Endothelial cell of umbilical vein (primary cell): ENCODE measurements at regions of chr11 and their contacts with region 1.

Region 1: DNA sequence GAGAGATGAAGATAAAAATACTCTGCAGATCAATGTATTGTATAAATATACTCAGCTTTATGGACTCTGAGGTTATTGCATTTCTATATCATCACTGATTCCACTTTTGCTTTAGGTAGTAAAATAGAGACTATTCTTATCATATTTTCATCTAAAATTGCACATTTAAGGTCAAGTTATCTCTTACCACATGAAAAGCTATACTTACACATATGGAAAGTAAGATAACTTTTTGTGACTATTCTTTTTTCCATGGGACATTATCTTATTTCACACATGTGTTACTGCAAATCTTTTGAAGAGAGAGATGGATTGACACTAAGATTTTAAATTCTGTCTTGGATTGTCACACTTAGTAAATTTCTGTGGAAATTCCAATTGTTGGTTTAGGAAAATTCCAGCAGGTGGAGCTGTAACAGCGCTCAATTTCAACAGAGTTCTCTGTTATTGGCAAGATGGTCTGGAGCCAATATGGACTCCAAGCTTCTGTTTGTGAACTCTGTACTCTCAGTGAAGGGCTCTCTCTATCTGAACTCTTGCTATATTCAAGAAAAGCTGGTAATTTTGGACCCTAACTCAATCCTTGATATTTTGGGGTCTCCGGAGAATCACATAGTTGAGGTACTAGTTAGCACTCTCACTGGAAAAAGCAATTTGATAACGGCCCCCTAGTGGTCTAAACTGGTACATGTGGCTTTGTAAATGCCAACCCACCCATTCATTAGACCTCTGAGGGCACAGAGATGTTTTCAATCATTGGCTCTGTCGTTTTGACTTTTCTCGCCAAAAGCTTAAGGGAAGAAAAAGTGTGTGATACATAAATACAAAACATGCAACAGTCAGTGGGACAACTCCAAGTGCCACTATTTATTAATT is 429.7 kb downstream of the ETS1 start:
- DNase-seq: peak; percentile 87
- H3K4me3 ChIP-seq: peak overlapping the region in 1 of 3 experiments; percentile 48
- H3K27ac ChIP-seq: peak overlapping the region; percentile 75
- H3K4me1 ChIP-seq: peaks cover 16% of the 10 kb centered on the region
- H3K27me3 ChIP-seq: no peaks in the 10 kb centered on the region
- CTCF ChIP-seq: peak; percentile 66 to 86
- POLR2A ChIP-seq: no peak

Region 2: GRCh38 chr11:128026596-128026995 is 131.1 kb before region 1 on chr11:
- CTCF ChIA-PET with region 1: interaction called, 44 read pairs
- POLR2A ChIA-PET with region 1: no interaction called
- dilution Hi-C with region 1: loop called (anchors 25 kb)
- intact Hi-C with region 1: loop called (anchors 1 kb)
- DNase-seq: peak; percentile 81
- H3K4me3 ChIP-seq: no peak overlapping the region
- H3K27ac ChIP-seq: peak overlapping the region; percentile 39
- H3K4me1 ChIP-seq: peaks cover 25% of the 10 kb centered on the region
- H3K27me3 ChIP-seq: no peaks in the 10 kb centered on the region
- CTCF ChIP-seq: no peak
- POLR2A ChIP-seq: no peak

Region 3: DNA sequence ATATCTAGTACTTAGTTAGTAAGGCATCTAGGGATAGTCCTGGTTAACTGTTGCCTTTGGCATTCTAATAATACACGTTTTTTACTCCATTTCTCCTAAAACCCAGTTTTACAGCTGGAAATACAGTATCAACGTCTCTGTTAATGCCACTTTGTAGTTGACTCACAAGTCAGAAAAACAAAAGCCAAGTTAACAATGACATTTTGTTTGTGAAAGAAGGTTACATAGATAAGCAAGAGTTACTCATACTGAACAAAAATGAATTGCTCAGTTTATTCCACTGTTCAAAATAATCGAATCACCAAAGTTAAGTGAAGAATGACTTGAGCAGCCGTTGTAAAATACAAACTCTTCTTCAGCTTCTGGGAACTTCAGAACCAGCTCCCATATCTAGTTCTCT is 110.6 kb before region 1 on chr11:
- CTCF ChIA-PET with region 1: interaction called, 11 read pairs
- POLR2A ChIA-PET with region 1: no interaction called
- dilution Hi-C with region 1: loop called (anchors 25 kb)
- intact Hi-C with region 1: loop called (anchors 5 kb)
- DNase-seq: peak; percentile 69
- H3K4me3 ChIP-seq: no peak overlapping the region
- H3K27ac ChIP-seq: peak overlapping the region; percentile 28
- H3K4me1 ChIP-seq: peaks cover 17% of the 10 kb centered on the region
- H3K27me3 ChIP-seq: no peaks in the 10 kb centered on the region
- CTCF ChIP-seq: no peak
- POLR2A ChIP-seq: no peak

Region 4: GRCh38 chr11:128095466-128095981 is 62.1 kb before region 1 on chr11:
- CTCF ChIA-PET with region 1: no interaction called
- POLR2A ChIA-PET with region 1: no interaction called
- dilution Hi-C with region 1: no loop called
- intact Hi-C with region 1: loop called (anchors 1 kb)
- DNase-seq: peak; percentile 95
- H3K4me3 ChIP-seq: no peak overlapping the region
- H3K27ac ChIP-seq: peak overlapping the region; percentile 94
- H3K4me1 ChIP-seq: peaks cover 14% of the 10 kb centered on the region
- H3K27me3 ChIP-seq: no peaks in the 10 kb centered on the region
- CTCF ChIP-seq: peak; percentile 14 to 28
- POLR2A ChIP-seq: no peak

Region 5: DNA sequence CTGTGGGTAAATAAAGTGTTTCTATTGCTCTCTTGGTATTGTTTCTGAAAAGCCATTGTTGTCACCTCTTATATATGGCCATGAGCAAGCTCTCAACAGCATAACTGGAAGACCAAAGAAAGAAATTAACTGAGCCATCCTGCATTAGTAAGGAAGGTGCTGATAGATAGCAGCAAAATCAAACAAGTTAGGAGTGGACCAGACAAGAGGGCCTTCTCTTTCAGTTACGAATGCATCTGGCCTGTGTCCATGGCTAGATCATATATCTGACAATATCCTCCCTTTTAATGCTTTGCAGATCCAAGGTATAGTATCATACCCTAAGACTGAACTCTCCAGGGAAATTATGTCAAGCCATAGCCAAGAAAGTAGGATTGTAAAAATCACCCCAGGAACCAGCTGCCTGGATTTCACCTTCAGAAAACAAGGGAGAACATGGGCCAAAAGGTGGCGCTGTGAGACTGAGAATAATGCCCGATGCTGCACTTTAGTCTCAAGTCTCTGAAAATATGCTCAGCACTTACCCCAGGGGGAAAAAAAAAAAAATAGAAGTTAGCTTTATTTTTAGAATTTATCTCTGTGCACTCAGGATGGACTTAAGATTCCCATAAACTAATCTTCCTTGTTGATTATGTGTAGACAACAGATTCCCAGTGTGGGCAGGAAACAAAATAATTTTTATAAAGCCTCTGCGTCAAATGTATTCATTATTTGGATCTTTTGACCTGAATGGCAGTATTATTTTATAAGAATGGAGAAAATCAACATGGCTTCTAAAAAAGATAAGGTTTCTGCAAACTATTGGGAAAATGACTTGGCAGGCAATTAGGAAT is 14.6 kb after region 1 on chr11:
- CTCF ChIA-PET with region 1: interaction called, 51 read pairs
- POLR2A ChIA-PET with region 1: no interaction called
- dilution Hi-C with region 1: no loop called
- intact Hi-C with region 1: no loop called
- DNase-seq: peak; percentile 91
- H3K4me3 ChIP-seq: no peak overlapping the region
- H3K27ac ChIP-seq: peak overlapping the region; percentile 42
- H3K4me1 ChIP-seq: peaks cover 9% of the 10 kb centered on the region
- H3K27me3 ChIP-seq: no peaks in the 10 kb centered on the region
- CTCF ChIP-seq: peak; percentile 64 to 74
- POLR2A ChIP-seq: no peak

Region 6: DNA sequence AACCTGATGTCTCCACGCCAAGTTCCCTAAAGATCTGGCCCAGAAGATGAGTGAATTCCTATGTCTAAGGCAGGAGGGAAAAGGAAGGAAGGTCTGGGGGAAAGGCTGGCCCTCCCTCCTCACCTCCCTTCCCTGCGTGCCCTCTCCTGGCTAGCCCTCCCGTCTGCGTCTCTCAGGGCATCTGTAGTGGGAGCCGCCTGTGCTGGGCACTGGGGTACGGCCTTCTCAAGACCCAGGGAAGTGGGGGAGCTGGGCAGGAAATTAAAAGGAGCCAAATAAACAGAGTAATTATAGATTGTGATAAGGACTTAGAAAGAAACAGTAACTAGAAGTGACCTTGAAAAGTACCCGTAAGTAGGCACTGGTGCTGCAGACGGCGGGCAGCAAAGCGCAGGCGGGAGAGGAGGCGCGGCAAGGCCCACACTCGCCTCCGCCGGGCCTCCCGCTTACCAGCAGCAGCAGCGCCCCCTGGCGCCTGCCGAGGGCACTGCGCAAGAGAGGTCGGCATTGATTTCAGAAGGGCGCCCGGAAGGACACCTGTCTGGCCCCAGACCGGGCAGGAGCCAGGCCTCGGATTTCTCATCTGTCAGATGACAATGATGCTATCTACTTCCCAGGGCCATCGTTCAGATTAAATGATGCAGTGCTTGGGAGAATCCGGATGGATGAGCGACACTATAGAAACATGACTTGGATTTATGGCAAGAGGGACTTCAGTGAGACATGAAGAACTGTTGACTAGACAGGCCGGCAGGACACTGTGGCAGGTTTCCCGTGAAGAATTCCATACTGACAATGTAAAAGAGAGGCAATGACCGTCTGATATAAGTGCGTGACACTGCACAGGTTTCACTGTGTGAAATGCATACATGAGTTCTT is 702.1 kb after region 1 on chr11:
- CTCF ChIA-PET with region 1: interaction called, 19 read pairs
- POLR2A ChIA-PET with region 1: no interaction called
- dilution Hi-C with region 1: no loop called
- intact Hi-C with region 1: loop called (anchors 1 kb)
- DNase-seq: peak; percentile 74
- H3K4me3 ChIP-seq: no peak overlapping the region
- H3K27ac ChIP-seq: no peak overlapping the region
- H3K4me1 ChIP-seq: peaks cover 2% of the 10 kb centered on the region
- H3K27me3 ChIP-seq: no peaks in the 10 kb centered on the region
- CTCF ChIP-seq: peak; percentile 97 to 99
- POLR2A ChIP-seq: no peak